OCI-LY7 (cell line): ENCODE measurements at regions of chr10 and their contacts with region 1.

Region 1: GRCh38 chr10:62637249-62638061 is 167.1 kb upstream of the ADO start:
- DNase-seq: peak; percentile 82
- H3K4me3 ChIP-seq: peak overlapping the region; percentile 63
- H3K27ac ChIP-seq: peak overlapping the region; percentile 90
- H3K4me1 ChIP-seq: peaks cover 87% of the 10 kb centered on the region
- CTCF ChIP-seq: no peak

Region 2: DNA sequence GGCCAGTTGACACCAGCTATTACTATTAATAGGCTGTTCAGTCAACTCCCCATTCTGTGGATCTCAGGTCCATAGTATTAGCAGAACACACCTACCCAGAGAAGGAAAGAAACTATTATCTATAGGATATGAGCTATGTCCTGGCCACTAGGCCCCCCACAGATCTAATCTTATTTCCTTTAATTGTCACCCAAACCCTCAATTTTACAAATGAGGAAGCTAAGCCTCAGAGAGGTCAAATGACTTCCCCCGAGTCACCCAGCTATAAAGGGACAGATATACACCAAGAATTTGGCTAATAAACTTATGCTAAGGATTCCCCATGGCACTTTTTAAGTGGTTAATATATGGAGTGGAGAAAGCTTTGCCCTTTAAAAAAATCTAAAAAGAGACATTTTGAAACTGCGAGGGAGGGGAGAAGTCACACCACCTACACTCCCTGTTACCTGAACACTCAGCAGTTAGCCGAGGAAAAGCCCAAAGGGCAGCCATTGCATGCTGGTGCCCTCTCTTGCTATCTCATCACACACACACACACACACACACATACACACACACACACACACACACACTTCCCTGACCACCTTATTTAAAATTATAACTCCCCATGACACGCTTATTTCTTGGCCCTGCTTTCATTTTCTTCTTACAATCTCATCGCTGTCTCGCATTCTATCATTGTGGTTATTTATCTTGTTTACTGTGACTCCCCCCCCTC is 10.1 kb after region 1 on chr10:
- CTCF ChIA-PET with region 1: interaction called, 15 read pairs
- POLR2A ChIA-PET with region 1: interaction called, 80 read pairs
- intact Hi-C with region 1: no loop called
- DNase-seq: no peak
- H3K4me3 ChIP-seq: no peak overlapping the region
- H3K27ac ChIP-seq: no peak overlapping the region
- H3K4me1 ChIP-seq: peaks cover 56% of the 10 kb centered on the region
- CTCF ChIP-seq: no peak

Region 3: DNA sequence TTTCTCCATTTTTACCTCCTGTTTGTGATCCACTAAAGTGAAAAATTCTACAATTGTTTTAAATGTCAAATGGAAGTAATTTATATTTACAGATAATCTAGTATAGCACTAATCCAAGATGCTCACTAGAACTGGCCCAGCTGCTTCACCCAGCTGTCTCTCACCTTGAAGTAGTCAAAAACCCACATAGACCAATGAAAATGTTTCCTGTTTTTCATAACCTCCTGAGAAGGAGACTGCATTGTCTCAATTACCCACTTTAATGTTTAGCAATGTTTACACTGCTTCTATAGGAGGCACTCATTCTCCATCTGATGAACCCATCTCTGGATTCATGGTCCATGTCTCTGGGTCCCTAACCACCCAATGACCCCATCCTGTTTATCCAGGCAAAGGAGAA is 110.9 kb after region 1 on chr10:
- CTCF ChIA-PET with region 1: no interaction called
- POLR2A ChIA-PET with region 1: no interaction called
- intact Hi-C with region 1: no loop called
- DNase-seq: peak; percentile 14
- H3K4me3 ChIP-seq: no peak overlapping the region
- H3K27ac ChIP-seq: no peak overlapping the region
- H3K4me1 ChIP-seq: peaks cover 12% of the 10 kb centered on the region
- CTCF ChIP-seq: no peak

Region 4: DNA sequence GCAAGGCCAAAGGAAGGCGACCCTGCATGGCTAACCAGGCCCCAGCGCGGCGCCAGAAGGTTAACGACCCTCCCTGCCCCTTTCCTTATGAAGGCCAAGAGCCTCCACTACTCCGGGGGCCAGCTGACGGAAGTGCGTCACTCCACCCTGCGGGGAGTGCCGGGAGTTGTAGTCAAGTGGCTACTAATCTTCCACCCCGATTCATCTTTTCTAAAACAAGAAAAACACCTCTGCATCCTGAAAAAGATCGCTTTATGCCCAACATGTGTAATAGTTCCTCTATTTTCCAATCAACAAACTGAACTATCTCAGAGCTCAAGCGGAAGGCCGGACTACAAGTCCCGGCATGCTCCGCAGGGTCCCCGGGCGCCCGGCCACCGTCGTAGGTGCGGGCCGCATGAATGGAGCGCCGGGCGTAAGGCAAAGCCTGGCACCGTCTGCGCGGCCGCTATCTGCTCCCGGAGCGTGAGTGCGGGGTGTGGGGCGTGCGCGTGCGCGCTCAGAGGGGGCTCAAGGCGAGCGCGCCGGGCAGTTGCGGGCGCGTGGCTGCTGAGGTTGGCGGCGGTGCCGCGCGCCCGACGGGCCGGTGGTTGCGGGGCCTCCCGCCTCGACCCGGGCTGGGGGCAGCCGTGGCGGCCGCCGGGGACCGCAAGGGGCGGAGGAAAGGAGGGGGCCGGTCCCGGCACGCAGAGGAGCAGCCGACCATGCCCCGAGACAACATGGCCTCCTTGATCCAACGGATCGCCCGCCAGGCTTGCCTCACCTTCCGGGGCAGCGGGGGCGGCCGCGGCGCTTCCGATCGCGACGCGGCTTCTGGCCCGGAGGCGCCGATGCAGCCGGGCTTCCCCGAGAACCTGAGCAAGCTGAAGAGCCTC is 167.1 kb after region 1 on chr10 and contains the start of gene ADO:
- CTCF ChIA-PET with region 1: interaction called, 3 read pairs
- POLR2A ChIA-PET with region 1: interaction called, 22 read pairs
- intact Hi-C with region 1: loop called (anchors 2 kb)
- DNase-seq: peak; percentile 89
- H3K4me3 ChIP-seq: peak within 1 kb of the TSS; percentile 88
- H3K27ac ChIP-seq: peak within 1 kb of the TSS; percentile 66
- H3K4me1 ChIP-seq: peaks cover 39% of the 10 kb centered on the region
- CTCF ChIP-seq: no peak
- total RNA-seq, gene ADO: 33.1 and 43.1 TPM in 2 replicates